ENCODE measurements at regions of chr7 and their contacts with region 1.

Region 1: DNA sequence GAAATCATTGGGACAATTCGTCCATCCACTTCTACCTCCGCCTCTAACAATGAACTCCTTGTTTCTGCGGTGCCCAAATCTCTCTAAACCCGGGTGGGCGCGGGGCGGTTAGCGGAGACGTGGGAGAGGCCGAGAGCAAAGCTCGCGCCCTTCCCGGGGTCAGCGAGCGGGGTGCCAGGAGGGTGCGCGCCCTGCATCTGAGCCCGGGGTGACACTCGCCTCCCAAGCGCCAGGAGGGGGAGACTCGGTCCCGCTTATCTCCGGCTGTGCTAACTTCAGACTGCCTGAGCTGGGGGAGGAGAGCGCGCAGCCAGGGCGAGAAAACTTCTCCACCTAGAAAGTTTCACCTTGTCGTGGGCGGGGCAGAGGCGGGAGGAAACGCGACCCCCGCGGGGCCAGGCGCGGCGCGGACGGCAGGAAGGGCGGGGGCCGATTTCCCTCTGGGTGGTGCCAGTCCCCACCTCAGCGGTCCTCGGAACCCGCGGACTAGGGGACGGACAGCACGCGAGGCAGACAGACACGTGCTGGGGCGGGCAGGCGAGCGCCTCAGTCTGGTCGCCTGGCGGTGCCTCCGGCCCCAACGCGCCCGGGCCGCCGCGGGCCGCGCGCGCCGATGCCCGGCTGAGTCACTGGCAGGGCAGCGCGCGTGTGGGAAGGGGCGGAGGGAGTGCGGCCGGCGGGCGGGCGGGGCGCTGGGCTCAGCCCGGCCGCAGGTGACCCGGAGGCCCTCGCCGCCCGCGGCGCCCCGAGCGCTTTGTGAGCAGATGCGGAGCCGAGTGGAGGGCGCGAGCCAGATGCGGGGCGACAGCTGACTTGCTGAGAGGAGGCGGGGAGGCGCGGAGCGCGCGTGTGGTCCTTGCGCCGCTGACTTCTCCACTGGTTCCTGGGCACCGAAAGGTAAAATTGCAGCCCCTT is at the start of gene MET:
- DNase-seq: peak; percentile 17
- H3K4me3 Mint-ChIP-seq: peak within 1 kb of the TSS; percentile 72
- H3K27ac Mint-ChIP-seq: peak within 1 kb of the TSS; percentile 43
- H3K4me1 Mint-ChIP-seq: peaks cover 7% of the 10 kb centered on the region
- H3K27me3 Mint-ChIP-seq: peaks cover 66% of the 10 kb centered on the region
- total RNA-seq, gene MET: 1.5 TPM in 2 replicates

Region 2: GRCh38 chr7:116786791-116787443 is 115.0 kb after region 1 on chr7:
- intact Hi-C with region 1: loop called (anchors 5 kb)
- DNase-seq: no peak
- H3K4me3 Mint-ChIP-seq: no peak overlapping the region
- H3K27ac Mint-ChIP-seq: no peak overlapping the region
- H3K4me1 Mint-ChIP-seq: no peaks in the 10 kb centered on the region
- H3K27me3 Mint-ChIP-seq: peaks cover 2% of the 10 kb centered on the region

Region 3: DNA sequence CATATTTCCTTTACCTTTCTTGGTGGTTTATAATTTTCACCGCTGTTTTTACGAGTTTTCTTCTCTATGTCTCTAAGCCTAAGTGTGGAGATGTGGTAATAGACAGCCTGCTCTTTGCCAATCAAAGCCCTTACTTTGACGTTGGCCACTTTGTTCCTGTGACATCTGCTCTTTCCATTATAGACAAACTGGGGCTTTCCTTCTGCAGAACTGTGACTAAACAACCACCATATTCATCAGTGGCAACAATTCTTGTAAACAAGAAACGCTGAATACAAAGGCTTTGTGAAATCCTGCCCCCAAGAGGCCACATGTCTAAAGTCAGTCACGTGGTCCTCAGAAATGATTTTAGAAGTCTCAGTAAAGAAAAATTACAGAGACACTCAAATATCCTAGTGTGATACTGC is 130.8 kb after region 1 on chr7:
- intact Hi-C with region 1: loop called (anchors 2 kb)
- DNase-seq: peak; percentile 14
- H3K4me3 Mint-ChIP-seq: no peak overlapping the region
- H3K27ac Mint-ChIP-seq: peak overlapping the region; percentile 40
- H3K4me1 Mint-ChIP-seq: peaks cover 12% of the 10 kb centered on the region
- H3K27me3 Mint-ChIP-seq: peaks cover 6% of the 10 kb centered on the region